Activated CD4-positive, alpha-beta T cell treated with anti-CD3 and anti-CD28 coated beads for 36 hours (primary cell): ENCODE measurements at regions of chr3 and their contacts with region 1.

Region 1: GRCh38 chr3:47824541-47825473 is 21.9 kb downstream of the DHX30 start:
- DNase-seq: peak; percentile 88
- ATAC-seq: peak; percentile 98
- H3K4me3 Mint-ChIP-seq: peak overlapping the region; percentile 90
- H3K27ac Mint-ChIP-seq: peak overlapping the region; percentile 80
- H3K4me1 Mint-ChIP-seq: peaks cover 36% of the 10 kb centered on the region
- H3K27me3 Mint-ChIP-seq: no peaks in the 10 kb centered on the region

Region 2: GRCh38 chr3:47513125-47513929 is 311.5 kb before region 1 on chr3 and contains the start of gene ELP6:
- CTCF ChIA-PET with region 1: interaction called, 3 read pairs
- POLR2A ChIA-PET with region 1: no interaction called
- intact Hi-C with region 1: loop called in 1 of 2 experiments (anchors 1 kb)
- DNase-seq: peak; percentile 99
- ATAC-seq: peak; percentile 97
- H3K4me3 Mint-ChIP-seq: peak within 1 kb of the TSS; percentile 91
- H3K27ac Mint-ChIP-seq: peak within 1 kb of the TSS; percentile 96
- H3K4me1 Mint-ChIP-seq: peaks cover 20% of the 10 kb centered on the region
- H3K27me3 Mint-ChIP-seq: no peaks in the 10 kb centered on the region
- total RNA-seq, gene ELP6: 27.8 to 40.3 TPM

Region 3: DNA sequence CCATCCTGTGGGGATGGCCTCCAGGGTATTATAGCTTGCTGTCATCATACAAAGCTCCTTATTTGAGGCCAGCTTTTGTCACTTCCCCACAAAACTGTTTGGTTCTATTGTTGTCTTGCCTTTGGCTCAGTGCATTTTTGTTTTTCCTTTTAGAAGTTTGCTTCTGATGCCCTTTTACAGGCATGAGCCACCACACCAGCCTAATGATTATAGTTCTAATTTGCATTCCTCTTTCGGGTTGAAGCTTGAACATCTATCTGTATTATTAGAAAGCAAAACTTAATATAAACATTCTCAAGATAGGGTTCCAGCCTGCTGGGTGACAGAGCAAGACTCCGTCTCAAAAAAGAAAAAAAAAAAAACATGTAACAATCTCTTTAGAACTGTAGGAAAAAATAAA is 82.9 kb before region 1 on chr3:
- CTCF ChIA-PET with region 1: no interaction called
- POLR2A ChIA-PET with region 1: no interaction called
- intact Hi-C with region 1: no loop called
- DNase-seq: no peak
- ATAC-seq: no peak
- H3K4me3 Mint-ChIP-seq: no peak overlapping the region
- H3K27ac Mint-ChIP-seq: no peak overlapping the region
- H3K4me1 Mint-ChIP-seq: peaks cover 13% of the 10 kb centered on the region
- H3K27me3 Mint-ChIP-seq: no peaks in the 10 kb centered on the region

Region 4: GRCh38 chr3:47802734-47803477 is 21.9 kb before region 1 on chr3 and contains the start of gene DHX30:
- CTCF ChIA-PET with region 1: interaction called, 25 read pairs
- POLR2A ChIA-PET with region 1: interaction called, 4 read pairs
- intact Hi-C with region 1: loop called (anchors 1 to 2 kb)
- DNase-seq: peak; percentile 93
- ATAC-seq: peak; percentile 92
- H3K4me3 Mint-ChIP-seq: peak within 1 kb of the TSS; percentile 96
- H3K27ac Mint-ChIP-seq: peak within 1 kb of the TSS; percentile 98
- H3K4me1 Mint-ChIP-seq: peaks cover 24% of the 10 kb centered on the region
- H3K27me3 Mint-ChIP-seq: no peaks in the 10 kb centered on the region
- total RNA-seq, gene DHX30: 81.6 to 82.3 TPM

Region 5: DNA sequence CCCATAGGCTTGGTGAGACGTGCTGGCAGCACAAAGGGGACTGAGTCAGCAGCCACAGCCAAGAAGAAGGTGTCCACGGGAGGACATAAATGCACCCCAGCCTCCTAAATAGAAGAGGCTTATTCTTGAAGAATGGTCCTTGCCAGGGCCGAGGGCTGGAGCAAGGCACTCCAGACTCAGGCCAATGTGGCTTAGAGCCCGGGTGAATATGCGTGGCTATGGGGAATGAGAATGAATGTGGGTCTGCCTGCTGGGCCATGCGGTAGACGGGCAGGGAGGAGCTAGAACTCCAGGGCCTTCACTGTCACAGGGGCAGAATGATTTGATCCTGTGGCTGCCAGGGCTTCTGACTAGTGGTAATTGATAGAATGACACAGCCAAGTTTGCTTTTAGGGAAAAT is 12.2 kb after region 1 on chr3:
- CTCF ChIA-PET with region 1: interaction called, 34 read pairs
- POLR2A ChIA-PET with region 1: interaction called, 3 read pairs
- intact Hi-C with region 1: no loop called
- DNase-seq: no peak
- ATAC-seq: no peak
- H3K4me3 Mint-ChIP-seq: no peak overlapping the region
- H3K27ac Mint-ChIP-seq: no peak overlapping the region
- H3K4me1 Mint-ChIP-seq: no peaks in the 10 kb centered on the region
- H3K27me3 Mint-ChIP-seq: no peaks in the 10 kb centered on the region

Region 6: GRCh38 chr3:47940232-47940631 is 115.4 kb after region 1 on chr3:
- CTCF ChIA-PET with region 1: no interaction called
- POLR2A ChIA-PET with region 1: no interaction called
- intact Hi-C with region 1: no loop called
- DNase-seq: no peak
- ATAC-seq: no peak
- H3K4me3 Mint-ChIP-seq: no peak overlapping the region
- H3K27ac Mint-ChIP-seq: no peak overlapping the region
- H3K4me1 Mint-ChIP-seq: no peaks in the 10 kb centered on the region
- H3K27me3 Mint-ChIP-seq: no peaks in the 10 kb centered on the region

Region 7: DNA sequence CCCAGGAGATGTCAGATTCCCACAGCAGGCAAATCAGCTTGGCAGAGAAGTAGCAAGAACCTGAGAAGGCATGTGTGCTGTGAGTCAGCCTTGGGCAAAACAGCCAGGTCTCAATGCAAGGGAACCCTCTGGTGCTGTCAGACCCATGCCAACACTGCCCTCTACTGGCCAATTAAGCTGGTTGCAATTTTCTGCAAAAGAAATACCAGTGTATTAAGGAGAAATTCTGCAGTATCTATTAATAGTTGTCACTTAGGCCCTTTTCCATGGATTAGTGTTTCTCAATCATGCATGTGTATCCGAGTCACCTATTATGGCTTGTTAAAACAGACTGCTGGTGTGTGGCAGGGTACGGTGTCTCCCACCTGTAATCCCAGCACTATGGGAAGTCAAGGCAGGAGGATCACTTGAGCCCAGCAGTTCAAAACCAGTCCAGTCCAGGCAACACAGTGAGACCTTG is 165.2 kb after region 1 on chr3:
- CTCF ChIA-PET with region 1: interaction called, 17 read pairs
- POLR2A ChIA-PET with region 1: no interaction called
- intact Hi-C with region 1: loop called in 1 of 2 experiments (anchors 1 kb)
- DNase-seq: peak; percentile 84
- ATAC-seq: peak; percentile 99
- H3K4me3 Mint-ChIP-seq: no peak overlapping the region
- H3K27ac Mint-ChIP-seq: no peak overlapping the region
- H3K4me1 Mint-ChIP-seq: peaks cover 10% of the 10 kb centered on the region
- H3K27me3 Mint-ChIP-seq: no peaks in the 10 kb centered on the region